Transverse colon (tissue), 4 donors: ENCODE measurements at regions of chr6 and their contacts with region 1.

Region 1: DNA sequence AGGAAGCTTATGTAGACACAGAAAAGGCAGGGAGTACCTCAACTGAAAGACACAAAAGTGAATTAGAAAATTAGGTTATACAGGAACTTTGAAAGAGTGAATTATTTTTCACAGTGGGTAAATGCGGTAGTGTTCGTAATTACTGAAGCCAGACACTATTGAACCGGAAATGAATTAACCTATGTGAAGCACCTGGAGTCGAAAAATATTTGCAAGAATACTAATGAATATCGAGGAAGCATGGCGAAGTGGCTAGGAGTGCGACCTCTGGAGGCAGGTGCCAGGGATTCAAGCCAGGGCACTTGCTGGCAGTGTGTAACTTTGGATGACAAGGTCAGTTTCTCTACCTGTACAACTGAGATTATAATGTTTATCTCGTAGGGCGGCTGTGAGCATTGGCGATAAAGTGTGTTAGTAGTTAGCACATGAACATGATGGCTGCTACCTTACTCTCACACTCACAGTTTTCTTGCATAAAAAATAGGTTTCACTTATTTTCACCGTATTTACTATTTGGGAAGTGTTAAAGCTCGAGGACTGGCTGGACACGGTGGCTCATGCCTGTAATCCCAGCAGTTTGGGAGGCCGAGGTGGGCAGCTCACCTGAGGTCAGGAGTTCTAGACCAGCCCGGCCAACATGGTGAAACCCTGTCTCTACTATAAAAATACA is 567 bp upstream of the SLC18B1 start:
- DNase-seq: peak; percentile 85
- H3K4me3 ChIP-seq: peak overlapping the region; percentile 50 to 91 (median 84)
- H3K27ac ChIP-seq: no peak overlapping the region
- H3K4me1 ChIP-seq: peaks cover 0 to 9% (median 7%) of the 10 kb centered on the region in 4 donors
- H3K27me3 ChIP-seq: no peaks in the 10 kb centered on the region
- CTCF ChIP-seq: peak; percentile 66 to 76 (median 69)
- EP300 ChIP-seq: no peak
- POLR2A ChIP-seq: no peak

Region 2: DNA sequence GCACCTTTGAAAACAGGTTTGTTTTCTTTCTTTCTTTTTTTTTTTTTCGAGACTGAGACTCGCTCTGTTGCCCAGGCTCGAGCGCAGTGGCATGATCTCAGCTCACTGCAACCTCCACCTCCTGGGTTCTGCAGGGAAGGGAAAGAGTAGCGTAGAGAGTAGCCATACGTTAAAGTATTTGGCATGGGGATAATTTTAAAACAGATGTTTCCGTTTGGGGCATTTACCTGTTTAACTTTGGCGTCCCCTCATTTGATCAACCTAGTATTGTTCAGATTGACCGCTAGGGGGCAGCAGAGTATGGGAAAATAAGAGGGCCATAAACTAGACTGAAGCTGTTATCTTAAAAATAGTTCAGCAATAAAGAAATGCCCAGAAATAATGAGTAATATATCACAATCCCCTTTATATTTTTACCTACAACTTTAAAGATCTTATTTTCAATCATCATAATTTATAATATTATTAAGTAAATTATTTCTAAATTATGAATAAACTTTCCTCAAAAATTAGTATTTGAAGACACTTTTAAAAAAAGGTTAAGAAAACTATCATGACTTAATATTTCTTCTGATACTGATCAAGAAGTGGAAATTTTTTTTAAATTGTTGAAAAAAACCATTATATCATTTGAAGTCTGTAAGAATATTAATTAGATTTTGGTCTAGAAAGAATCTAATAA is 268.6 kb before region 1 on chr6:
- in situ Hi-C with region 1: loop called in 1 of 4 experiments (anchors 25 kb)
- intact Hi-C with region 1: no loop called
- DNase-seq: peak; percentile 63
- H3K4me3 ChIP-seq: peak overlapping the region in 1 of 4 donors; percentile 9
- H3K27ac ChIP-seq: no peak overlapping the region
- H3K4me1 ChIP-seq: peaks cover 0 to 4% (median 2%) of the 10 kb centered on the region in 4 donors
- H3K27me3 ChIP-seq: no peaks in the 10 kb centered on the region
- CTCF ChIP-seq: peak; percentile 80 to 90 (median 85)
- EP300 ChIP-seq: no peak
- POLR2A ChIP-seq: no peak

Region 3: GRCh38 chr6:133952815-133953633 is 1154.0 kb after region 1 on chr6 and contains the start of gene TBPL1:
- in situ Hi-C with region 1: no loop called
- intact Hi-C with region 1: loop called (anchors 10 kb)
- DNase-seq: peak; percentile 95
- H3K4me3 ChIP-seq: peak within 1 kb of the TSS; percentile 67 to 99 (median 90)
- H3K27ac ChIP-seq: peak within 1 kb of the TSS; percentile 92 to 95 (median 94)
- H3K4me1 ChIP-seq: peaks cover 12 to 28% (median 17%) of the 10 kb centered on the region in 4 donors
- H3K27me3 ChIP-seq: no peaks in the 10 kb centered on the region
- CTCF ChIP-seq: no peak
- EP300 ChIP-seq: no peak
- POLR2A ChIP-seq: peak; percentile 76
- total RNA-seq, gene TBPL1: 4.8 to 10.0 (median 4.9) TPM in 3 of 4 donors, not detected in the other